ENCODE measurements at regions of chr3 and their contacts with region 1.

Region 1: DNA sequence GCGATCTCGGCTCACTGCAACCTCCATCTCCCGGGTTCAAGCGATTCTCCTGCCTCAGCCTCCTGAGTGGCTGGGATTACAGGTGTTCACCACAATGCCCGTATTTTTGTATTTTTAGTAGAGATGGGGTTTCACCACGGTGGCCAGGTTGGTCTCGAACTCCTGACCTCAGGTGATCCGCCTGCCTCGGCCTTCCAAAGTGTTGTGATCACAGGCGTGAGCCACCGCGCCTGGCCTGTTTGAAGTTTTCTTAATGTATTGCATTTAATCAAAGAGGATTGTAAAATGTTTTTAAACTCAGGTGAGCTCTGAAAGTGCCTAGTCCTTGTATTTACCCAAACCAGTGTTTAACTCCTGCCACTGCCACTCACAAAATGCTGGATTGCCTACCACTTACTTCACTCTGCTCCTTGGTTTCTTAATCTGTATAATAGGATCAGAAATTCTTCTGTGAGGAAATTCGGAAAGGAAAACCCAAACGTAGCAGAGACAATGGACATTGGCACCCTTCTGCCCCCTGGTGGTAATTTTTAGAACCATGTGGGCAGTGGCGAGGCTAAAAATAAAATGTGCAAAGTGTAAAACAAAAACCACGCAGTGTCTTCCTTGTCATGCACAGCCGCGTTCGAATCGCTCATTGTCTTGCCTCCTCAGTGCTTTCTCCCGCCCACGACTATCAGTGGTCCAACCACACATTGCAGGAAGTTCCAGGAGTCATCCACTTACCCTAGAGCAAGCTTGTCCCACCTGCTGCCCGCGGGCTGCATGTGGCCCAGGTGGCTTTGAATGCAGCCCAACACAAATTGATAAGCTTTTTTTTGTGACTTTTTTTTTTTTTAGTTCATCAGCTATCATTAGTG is 27.3 kb downstream of the CEP19 start:
- DNase-seq: peak in 1 of 2 donors; percentile 75
- H3K4me3 ChIP-seq: no peak overlapping the region
- H3K27ac ChIP-seq: no peak overlapping the region
- H3K4me1 ChIP-seq: no peaks in the 10 kb centered on the region
- H3K27me3 ChIP-seq: no peaks in the 10 kb centered on the region
- CTCF ChIP-seq: peak; percentile 74 to 87 (median 75)

Region 2: GRCh38 chr3:196254376-196255283 is 430.1 kb before region 1 on chr3:
- intact Hi-C with region 1: loop called (anchors 2 kb)
- DNase-seq: no peak
- H3K4me3 ChIP-seq: no peak overlapping the region
- H3K27ac ChIP-seq: no peak overlapping the region
- H3K4me1 ChIP-seq: no peaks in the 10 kb centered on the region
- H3K27me3 ChIP-seq: no peaks in the 10 kb centered on the region
- CTCF ChIP-seq: no peak

Region 3: DNA sequence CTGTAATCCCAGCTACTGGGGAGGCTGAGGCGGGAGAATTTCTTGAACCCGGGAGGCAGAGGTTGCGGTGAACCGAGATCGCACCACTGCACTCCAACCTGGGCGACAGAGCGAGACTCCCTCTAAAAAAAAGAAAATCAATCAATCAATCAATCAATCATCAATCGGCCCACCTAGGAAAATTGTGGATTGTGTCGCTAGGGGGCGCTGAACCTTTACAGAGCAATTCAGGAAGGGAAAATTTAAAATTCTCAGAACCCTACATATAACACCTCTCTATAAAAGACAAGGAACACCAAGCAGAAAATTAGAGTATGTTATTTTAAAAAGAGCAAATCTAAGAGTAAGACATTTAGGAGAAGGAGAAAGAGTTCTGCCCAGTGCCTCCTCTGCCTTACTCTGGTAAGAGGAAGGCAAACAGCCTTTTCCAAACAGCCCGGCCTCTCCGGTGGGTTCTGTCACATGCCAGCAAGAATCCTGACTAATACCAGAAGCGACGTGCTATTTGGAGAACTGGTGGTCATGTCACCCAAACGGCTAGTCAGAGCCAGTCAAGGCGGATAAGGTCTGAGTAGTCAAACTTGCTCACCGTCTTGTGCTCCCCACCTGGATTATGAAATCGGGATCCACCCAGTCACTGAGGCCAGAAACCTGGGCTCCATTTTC is 147.3 kb before region 1 on chr3:
- intact Hi-C with region 1: loop called (anchors 5 kb)
- DNase-seq: no peak
- H3K4me3 ChIP-seq: no peak overlapping the region
- H3K27ac ChIP-seq: no peak overlapping the region
- H3K4me1 ChIP-seq: no peaks in the 10 kb centered on the region
- H3K27me3 ChIP-seq: no peaks in the 10 kb centered on the region
- CTCF ChIP-seq: peak; percentile 41 to 63 (median 60)

Region 4: DNA sequence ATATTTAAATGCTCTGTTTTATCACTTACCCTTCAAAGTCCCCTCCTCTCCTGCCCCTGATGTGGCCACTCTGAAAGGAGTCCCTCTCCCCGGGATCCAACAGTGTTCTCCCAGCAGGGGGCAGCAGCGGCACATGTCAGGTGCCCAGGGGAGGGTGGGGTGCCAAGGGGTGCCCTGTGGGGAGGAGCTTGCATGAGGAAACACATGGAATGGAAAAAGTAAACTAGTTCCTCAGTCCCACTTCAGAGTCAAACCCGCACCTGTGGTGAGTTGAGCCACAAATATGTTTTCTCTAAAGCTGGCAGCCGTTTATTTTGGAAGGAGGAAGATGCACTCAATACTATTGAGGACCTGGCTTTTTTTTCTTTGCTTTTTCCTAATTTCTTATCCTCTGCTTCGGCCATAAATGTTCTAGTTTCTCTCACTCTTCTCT is 75.4 kb before region 1 on chr3:
- intact Hi-C with region 1: loop called (anchors 1 kb)
- DNase-seq: peak; percentile 46 to 89
- H3K4me3 ChIP-seq: no peak overlapping the region
- H3K27ac ChIP-seq: no peak overlapping the region
- H3K4me1 ChIP-seq: no peaks in the 10 kb centered on the region
- H3K27me3 ChIP-seq: no peaks in the 10 kb centered on the region
- CTCF ChIP-seq: peak; percentile 39 to 71 (median 70)